ENCODE measurements at regions of chr1 and their contacts with region 1.

Region 1: DNA sequence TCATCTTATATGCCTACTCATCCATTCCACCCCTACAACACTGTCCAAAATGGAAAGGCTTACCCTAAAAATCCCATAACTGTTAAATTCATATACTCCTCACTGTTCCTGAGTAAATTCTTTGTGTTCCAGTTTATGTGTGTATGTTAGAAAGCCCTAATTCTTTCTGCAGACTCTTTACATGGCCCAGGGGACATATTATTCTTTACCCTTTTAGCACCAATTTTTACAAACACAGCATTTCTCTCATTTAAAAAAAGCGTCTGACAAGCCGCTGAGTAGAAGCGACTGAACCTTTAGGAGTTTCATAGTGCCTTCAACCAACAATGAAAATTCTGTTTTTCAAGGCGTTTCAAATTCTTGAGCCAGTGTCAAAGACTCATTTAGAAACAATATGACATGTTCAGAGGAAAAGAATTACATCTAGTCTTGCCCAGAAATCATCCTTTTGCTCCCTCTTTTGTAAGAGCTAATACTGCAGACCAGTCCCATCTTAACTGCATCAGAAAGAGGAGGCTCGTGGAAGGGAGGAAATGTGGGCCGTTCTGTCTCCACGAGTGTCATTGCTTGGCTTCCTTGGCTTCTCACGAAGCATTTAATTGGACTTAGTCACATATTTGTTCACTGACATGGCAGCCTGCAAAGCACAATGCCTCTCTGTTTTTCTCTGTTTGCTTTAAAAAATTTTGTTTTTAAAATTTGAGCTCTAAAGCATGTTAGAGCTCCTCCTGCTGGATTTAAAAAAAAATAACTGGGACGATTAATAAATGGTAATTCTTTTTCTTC is 21.3 kb upstream of the C1orf105 start:
- DNase-seq: peak; percentile 82

Region 2: DNA sequence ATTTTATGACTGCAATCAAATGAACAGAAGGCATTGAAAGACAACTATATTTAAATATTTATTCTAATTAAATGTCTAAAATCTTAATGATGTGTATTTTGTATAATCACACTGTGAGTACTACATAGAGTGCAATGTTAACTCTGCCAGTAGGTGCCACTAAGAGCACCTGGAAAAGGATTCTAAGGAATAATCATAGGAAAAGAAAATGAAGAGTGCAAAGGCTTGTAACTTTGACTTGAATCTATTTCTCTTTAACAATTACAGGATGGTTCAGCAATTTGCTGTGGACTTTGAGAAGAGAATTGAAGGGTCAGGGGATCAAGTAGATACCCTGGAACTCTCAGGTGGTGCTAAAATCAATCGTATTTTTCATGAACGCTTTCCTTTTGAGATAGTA is 357.4 kb before region 1 on chr1:
- intact Hi-C with region 1: loop called in 1 of 2 experiments (anchors 10 kb)
- DNase-seq: no peak

Region 3: DNA sequence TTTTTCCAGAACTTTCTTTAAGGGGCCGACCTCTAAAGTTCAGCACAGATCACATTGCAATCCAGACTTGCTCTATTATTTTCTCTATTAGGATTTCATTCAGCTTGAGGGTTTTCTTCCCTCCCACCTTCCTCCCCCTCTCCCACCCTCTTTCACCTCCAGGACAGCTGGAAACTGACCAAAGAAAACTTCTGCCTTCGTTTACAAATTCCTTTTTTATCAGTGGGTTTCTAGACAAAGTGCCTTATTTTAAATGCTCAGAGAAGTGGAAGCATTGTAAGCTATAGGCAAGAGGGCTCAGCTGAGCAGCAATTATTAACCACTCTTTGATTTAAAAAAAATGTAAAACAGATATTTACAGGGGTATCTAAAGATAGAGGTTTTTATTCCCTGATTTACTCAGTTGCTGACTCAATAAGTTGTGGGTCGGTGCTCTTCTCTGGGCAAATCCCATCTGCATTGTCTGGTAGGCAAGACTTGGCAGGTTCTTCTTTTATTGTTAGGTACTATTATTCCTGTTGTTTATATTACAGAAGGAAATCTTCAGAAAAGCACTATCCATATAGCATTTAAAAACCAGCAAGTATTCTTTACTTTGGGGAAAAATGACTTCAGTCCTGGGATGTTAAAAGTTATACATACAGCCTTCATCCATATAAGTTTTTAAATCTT is 255.6 kb before region 1 on chr1:
- intact Hi-C with region 1: loop called in 1 of 2 experiments (anchors 2 kb)
- DNase-seq: no peak

Region 4: DNA sequence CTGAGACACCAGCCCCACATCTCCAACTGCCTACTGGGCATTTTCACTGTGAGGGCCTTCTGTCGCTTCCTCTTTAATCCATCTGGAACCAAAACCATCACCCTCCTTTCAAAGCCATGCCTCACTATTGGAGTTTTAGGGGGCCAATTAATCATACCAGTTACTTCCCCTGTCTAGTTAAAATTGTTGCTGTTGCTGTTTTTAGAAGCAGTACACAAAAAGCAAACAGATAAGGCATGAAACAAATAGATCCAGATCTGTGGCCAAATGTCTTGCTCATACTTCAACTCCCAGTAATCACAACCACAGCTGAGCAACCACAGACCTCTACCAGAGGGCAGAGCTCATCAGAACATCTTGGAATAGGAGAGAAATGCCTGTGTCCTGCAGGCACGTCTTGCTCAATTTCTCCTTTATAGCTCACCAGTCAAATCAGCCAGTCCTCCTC is 112.5 kb before region 1 on chr1:
- intact Hi-C with region 1: loop called in 1 of 2 experiments (anchors 10 kb)
- DNase-seq: peak; percentile 67

Region 5: GRCh38 chr1:172497230-172497629 is 98.1 kb after region 1 on chr1:
- intact Hi-C with region 1: no loop called
- DNase-seq: no peak

Region 6: DNA sequence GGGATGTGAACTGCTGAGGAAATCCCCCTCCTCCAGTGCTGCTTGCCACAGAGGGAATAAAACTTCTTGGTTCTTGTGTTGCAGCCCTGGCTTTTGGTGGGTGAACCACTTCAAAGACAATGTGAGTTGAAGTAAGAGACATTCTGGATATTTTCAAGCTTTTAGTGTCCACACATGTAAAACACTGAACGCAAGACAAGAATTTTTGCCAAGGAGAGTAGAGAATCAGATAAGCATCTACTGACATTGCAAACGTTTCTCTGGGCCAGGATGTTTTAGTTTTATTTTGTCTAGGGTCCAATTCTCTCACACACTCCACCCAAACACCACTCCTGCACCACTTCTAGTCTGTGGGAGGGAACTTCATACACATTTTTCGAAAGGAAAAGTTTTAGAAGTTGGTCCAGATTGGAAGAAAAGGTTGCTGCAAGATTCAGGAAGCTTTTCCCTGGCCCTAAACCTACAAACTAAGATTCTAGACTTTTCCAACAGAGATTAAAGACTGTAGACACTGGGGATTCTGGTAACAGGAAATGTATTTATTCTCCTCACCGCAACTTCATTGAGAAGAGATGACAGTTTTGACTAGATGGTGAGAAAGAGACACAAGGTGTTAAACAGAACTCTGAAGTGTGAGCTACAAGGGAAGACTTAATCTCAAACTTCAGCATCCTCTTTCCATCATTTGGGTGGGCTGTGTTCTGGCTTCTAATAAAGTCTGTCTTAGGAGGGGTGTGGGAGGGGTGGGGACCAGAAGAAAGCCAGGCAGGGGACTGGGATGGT is 275.9 kb after region 1 on chr1:
- intact Hi-C with region 1: no loop called
- DNase-seq: no peak

Measured in posterior vena cava (tissue), 2 donors.